OCI-LY7 (cell line): ENCODE measurements at regions of chr11 and their contacts with region 1.

Region 1: DNA sequence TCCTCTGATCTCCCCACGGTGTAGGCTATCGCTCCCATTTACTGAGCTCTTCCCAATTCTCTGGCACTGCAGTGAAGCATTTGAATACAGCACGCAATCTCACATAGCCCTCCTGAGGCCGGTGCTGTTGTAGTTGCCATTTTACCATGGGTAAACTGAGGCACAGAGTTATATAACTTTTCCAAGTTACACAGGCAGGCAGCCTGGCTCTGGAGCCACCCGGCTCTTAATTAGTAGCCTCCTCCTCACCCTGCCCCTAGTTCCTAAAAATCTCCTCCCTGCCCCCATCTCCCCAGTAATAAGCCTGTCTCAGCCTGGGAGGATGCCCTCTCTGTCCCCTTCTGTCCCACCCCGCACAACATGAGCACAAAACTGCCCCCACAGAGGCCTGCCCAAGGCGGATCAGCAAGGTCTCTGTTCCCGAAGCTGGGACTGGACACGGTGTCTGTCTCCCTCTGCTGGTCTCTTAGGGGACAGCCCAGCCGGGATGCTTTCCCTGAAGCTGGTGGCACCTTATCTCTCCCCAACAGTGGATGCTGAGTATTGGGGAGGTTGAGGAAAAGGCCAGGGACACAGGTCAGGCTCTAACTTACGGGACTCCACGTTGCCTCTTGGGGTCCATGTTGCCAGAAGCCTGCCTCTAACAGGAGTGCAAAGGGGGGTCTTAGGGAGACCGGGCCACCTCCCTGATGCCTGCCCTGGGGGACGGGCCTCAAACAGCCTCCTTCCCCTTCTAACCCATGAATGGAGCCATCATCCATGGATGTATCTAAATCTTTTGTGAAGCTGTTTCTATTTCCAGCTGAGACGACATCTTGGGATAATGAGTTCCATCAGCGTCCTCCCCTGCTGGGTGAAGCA is 9.1 kb upstream of the CLCF1 start:
- DNase-seq: peak; percentile 88
- H3K4me3 ChIP-seq: no peak overlapping the region
- H3K27ac ChIP-seq: no peak overlapping the region
- H3K4me1 ChIP-seq: peaks cover 29% of the 10 kb centered on the region
- CTCF ChIP-seq: peak; percentile 97

Region 2: GRCh38 chr11:67099831-67100324 is 282.6 kb before region 1 on chr11:
- CTCF ChIA-PET with region 1: interaction called, 3 read pairs
- POLR2A ChIA-PET with region 1: no interaction called
- intact Hi-C with region 1: loop called (anchors 5 kb)
- DNase-seq: peak; percentile 27
- H3K4me3 ChIP-seq: no peak overlapping the region
- H3K27ac ChIP-seq: no peak overlapping the region
- H3K4me1 ChIP-seq: peaks cover 20% of the 10 kb centered on the region
- CTCF ChIP-seq: no peak

Region 3: DNA sequence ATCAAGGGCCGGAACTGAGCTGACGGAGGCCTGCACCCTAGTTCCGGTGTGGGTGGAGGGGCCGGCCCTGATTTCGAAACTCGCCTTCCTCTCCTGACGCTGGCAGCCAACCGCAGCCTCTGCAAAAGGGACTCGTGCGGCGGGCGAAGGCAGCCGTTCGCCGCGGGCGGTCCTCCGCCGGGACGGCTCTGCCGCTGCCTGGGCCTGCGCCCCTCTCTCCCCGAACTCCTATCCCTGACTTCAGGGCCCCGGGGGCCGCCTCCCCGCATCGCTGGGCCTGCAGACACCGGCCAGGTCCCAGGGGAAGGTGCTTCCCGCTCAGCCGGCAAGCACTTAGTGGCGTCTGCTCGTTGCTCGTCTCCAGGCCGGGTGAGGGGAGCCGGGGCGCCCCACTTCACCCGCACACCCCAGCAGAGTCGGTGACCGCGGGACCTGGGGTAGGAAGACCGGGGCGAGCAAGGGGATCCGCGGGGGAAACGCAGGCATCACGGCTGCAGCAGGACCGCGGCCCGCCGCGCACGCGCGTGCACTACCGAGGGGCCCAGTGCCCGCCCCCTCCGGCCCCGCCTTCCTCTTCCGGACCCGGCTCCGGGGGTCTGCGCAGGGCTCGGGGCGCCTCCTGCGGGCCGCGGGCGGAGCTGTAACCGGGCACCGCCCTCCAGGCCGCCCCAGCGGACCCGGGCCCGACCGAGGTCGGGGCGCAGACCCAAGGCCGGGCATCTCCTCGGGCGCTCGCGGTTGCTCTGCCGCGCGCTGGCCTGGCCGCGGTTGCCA is 93.9 kb before region 1 on chr11:
- CTCF ChIA-PET with region 1: interaction called, 3 read pairs
- POLR2A ChIA-PET with region 1: interaction called, 3 read pairs
- intact Hi-C with region 1: loop called (anchors 1 kb)
- DNase-seq: peak; percentile 94
- H3K4me3 ChIP-seq: peak overlapping the region; percentile 68
- H3K27ac ChIP-seq: peak overlapping the region; percentile 94
- H3K4me1 ChIP-seq: peaks cover 47% of the 10 kb centered on the region
- CTCF ChIP-seq: peak; percentile 67

Region 4: GRCh38 chr11:67345920-67346799 is 36.3 kb before region 1 on chr11:
- CTCF ChIA-PET with region 1: interaction called, 136 read pairs
- POLR2A ChIA-PET with region 1: interaction called, 106 read pairs
- intact Hi-C with region 1: loop called (anchors 1 kb)
- DNase-seq: peak; percentile 66
- H3K4me3 ChIP-seq: no peak overlapping the region
- H3K27ac ChIP-seq: no peak overlapping the region
- H3K4me1 ChIP-seq: peaks cover 55% of the 10 kb centered on the region
- CTCF ChIP-seq: peak; percentile 99